ENCODE measurements at regions of chr11 and their contacts with region 1.

Region 1: DNA sequence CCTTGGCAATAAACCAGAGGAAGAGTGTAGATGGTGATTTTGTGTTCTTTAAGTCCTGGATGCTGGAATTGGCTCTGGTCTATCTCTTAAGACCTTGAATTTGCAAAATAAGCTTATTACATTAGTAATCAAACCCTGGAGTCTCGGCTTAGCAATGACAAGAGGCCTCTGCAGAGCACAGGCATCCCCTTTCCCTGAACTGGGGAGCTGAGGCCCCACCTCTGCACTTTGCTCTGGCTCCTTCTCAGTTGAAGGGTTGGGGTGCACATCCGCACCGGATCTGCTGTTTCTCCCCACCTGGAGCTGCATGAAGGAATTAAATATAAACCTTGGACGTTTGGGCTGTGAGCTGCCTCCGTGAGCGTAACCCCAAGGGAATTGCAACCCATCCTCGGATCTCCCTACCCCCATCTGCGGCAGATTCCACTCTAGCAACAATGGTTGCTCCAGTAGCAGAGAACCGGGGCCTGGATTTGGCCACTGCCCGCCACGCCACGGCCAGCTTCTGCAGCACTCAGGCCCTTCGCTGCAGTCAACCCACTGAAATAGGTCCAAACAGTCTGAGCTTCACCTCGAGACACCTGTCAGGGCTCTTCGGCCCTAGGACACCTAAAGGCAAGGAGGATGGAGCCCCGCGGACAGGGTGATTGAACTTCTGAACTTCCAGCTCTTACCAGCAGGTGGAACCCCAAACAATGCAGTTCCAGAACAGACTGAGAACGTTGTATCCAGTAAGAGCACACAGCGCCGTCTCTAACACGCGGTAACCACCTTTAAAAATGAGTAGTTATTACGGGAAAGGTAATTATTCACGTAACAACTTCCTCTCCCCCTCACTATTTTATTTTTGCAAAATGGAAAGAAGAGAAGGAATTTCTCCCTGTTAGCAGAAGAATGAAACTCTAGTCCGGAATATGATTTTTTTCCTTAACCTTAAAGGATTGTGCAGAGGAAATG is 54.8 kb upstream of the CAPRIN1 start:
- DNase-seq: peak; percentile 50 to 84 (median 75)
- ATAC-seq: peak; percentile 100
- H3K4me3 ChIP-seq: no peak overlapping the region
- H3K4me3 Mint-ChIP-seq: peak overlapping the region; percentile 59
- H3K27ac ChIP-seq: no peak overlapping the region
- H3K27ac Mint-ChIP-seq: no peak overlapping the region
- H3K4me1 ChIP-seq: peaks cover 7% of the 10 kb centered on the region
- H3K4me1 Mint-ChIP-seq: peaks cover 13% of the 10 kb centered on the region
- H3K27me3 ChIP-seq: peaks cover 0 to 2% of the 10 kb centered on the region in 2 experiments
- H3K27me3 Mint-ChIP-seq: peaks cover 18% of the 10 kb centered on the region
- CTCF ChIP-seq: peak; percentile 75

Region 2: GRCh38 chr11:34006876-34007275 is 10.1 kb after region 1 on chr11:
- CTCF ChIA-PET with region 1: interaction called, 17 read pairs
- POLR2A ChIA-PET with region 1: interaction called, 4 read pairs
- intact Hi-C with region 1: no loop called
- DNase-seq: no peak
- ATAC-seq: no peak
- H3K4me3 ChIP-seq: no peak overlapping the region
- H3K4me3 Mint-ChIP-seq: no peak overlapping the region
- H3K27ac ChIP-seq: no peak overlapping the region
- H3K27ac Mint-ChIP-seq: no peak overlapping the region
- H3K4me1 ChIP-seq: no peaks in the 10 kb centered on the region
- H3K4me1 Mint-ChIP-seq: no peaks in the 10 kb centered on the region
- H3K27me3 ChIP-seq: no peaks in the 10 kb centered on the region
- H3K27me3 Mint-ChIP-seq: peaks cover 7% of the 10 kb centered on the region
- CTCF ChIP-seq: no peak

Region 3: GRCh38 chr11:34105079-34105956 is 108.5 kb after region 1 on chr11 and contains the start of gene NAT10:
- CTCF ChIA-PET with region 1: interaction called, 11 read pairs
- POLR2A ChIA-PET with region 1: no interaction called
- intact Hi-C with region 1: loop called (anchors 1 kb)
- DNase-seq: peak; percentile 93 to 100 (median 98)
- ATAC-seq: peak; percentile 93
- H3K4me3 ChIP-seq: peak within 1 kb of the TSS; percentile 70 to 94
- H3K4me3 Mint-ChIP-seq: peak within 1 kb of the TSS; percentile 97
- H3K27ac ChIP-seq: peak within 1 kb of the TSS; percentile 81 to 90
- H3K27ac Mint-ChIP-seq: peak within 1 kb of the TSS; percentile 99
- H3K4me1 ChIP-seq: peaks cover 27% of the 10 kb centered on the region
- H3K4me1 Mint-ChIP-seq: peaks cover 60% of the 10 kb centered on the region
- H3K27me3 ChIP-seq: no peaks in the 10 kb centered on the region
- H3K27me3 Mint-ChIP-seq: no peaks in the 10 kb centered on the region
- CTCF ChIP-seq: no peak
- total RNA-seq, gene NAT10: 51.1 to 59.6 TPM

Region 4: GRCh38 chr11:34468209-34468841 is 471.5 kb after region 1 on chr11:
- CTCF ChIA-PET with region 1: interaction called, 7 read pairs
- POLR2A ChIA-PET with region 1: no interaction called
- intact Hi-C with region 1: loop called in 1 of 2 experiments (anchors 2 kb)
- DNase-seq: peak in 6 of 9 experiments; percentile 5 to 55 (median 32)
- ATAC-seq: peak; percentile 76
- H3K4me3 ChIP-seq: no peak overlapping the region
- H3K4me3 Mint-ChIP-seq: no peak overlapping the region
- H3K27ac ChIP-seq: no peak overlapping the region
- H3K27ac Mint-ChIP-seq: no peak overlapping the region
- H3K4me1 ChIP-seq: no peaks in the 10 kb centered on the region
- H3K4me1 Mint-ChIP-seq: peaks cover 2% of the 10 kb centered on the region
- H3K27me3 ChIP-seq: no peaks in the 10 kb centered on the region
- H3K27me3 Mint-ChIP-seq: no peaks in the 10 kb centered on the region
- CTCF ChIP-seq: peak; percentile 65

Measured in CD8-positive, alpha-beta T cell (primary cell).